CD8-positive, alpha-beta T cell (primary cell): ENCODE measurements at regions of chr10 and their contacts with region 1.

Region 1: DNA sequence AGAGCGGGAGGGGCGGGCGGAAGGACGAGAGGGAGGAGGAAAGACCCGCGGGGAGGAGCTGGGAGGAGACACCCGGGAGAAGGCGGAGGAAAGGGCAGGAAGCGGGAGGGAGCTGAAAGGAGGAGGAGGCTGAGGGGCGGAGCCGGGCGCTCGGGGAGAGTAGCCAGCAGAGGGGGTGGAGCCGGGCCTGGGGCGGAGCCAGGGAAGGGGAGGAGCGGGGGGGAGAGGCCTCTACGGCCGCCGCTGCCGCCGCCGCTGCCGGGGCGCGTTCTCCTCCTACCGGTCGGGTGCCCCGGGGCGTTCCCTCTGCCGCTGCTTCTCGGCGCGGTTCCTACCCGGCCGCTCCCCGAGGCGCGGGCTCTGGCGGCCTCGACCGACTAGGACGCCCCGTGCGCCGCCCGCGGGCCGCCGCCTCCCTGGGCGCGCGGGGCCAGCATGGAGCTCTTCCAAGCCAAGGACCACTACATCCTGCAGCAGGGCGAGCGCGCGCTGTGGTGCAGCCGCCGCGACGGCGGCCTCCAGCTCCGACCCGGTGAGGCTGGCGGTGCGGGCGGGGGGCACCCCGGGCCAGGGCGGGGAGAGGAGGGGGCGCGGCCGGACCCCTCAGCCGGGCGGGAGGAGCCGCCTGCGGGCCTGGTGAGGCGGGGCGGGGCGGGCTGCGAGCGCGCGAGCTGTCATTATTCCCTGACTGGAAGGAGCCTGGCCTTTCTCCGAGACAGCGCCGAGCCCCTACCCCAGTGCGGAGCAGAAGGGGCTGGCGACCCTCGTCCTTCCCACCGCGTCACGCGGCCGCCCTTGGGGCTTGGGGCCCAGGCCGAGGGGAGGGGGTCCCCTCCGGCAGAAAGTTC is at the start of gene INPP5F:
- DNase-seq: peak; percentile 95 to 100 (median 98)
- ATAC-seq: peak; percentile 95
- H3K4me3 ChIP-seq: peak within 1 kb of the TSS; percentile 64 to 81
- H3K4me3 Mint-ChIP-seq: peak within 1 kb of the TSS; percentile 90
- H3K27ac ChIP-seq: peak within 1 kb of the TSS; percentile 33 to 44
- H3K27ac Mint-ChIP-seq: peak within 1 kb of the TSS; percentile 81
- H3K4me1 ChIP-seq: peaks cover 16% of the 10 kb centered on the region
- H3K4me1 Mint-ChIP-seq: peaks cover 27% of the 10 kb centered on the region
- H3K27me3 ChIP-seq: no peaks in the 10 kb centered on the region
- H3K27me3 Mint-ChIP-seq: no peaks in the 10 kb centered on the region
- CTCF ChIP-seq: no peak
- total RNA-seq, gene INPP5F: 3.8 to 6.5 TPM

Region 2: GRCh38 chr10:118046395-118047156 is 1679.5 kb before region 1 on chr10 and contains the start of gene RAB11FIP2:
- CTCF ChIA-PET with region 1: no interaction called
- POLR2A ChIA-PET with region 1: no interaction called
- intact Hi-C with region 1: loop called in 1 of 2 experiments (anchors 5 kb)
- DNase-seq: peak; percentile 93 to 98 (median 96)
- ATAC-seq: peak; percentile 94
- H3K4me3 ChIP-seq: peak within 1 kb of the TSS; percentile 54 to 75
- H3K4me3 Mint-ChIP-seq: peak within 1 kb of the TSS; percentile 89
- H3K27ac ChIP-seq: peak within 1 kb of the TSS; percentile 44 to 70
- H3K27ac Mint-ChIP-seq: peak within 1 kb of the TSS; percentile 89
- H3K4me1 ChIP-seq: peaks cover 18% of the 10 kb centered on the region
- H3K4me1 Mint-ChIP-seq: peaks cover 45% of the 10 kb centered on the region
- H3K27me3 ChIP-seq: no peaks in the 10 kb centered on the region
- H3K27me3 Mint-ChIP-seq: no peaks in the 10 kb centered on the region
- CTCF ChIP-seq: no peak
- total RNA-seq, gene RAB11FIP2: 32.6 to 34.2 TPM

Region 3: GRCh38 chr10:118341791-118342637 is 1384.0 kb before region 1 on chr10 and contains the start of gene FAM204A:
- CTCF ChIA-PET with region 1: no interaction called
- POLR2A ChIA-PET with region 1: no interaction called
- intact Hi-C with region 1: loop called in 1 of 2 experiments (anchors 5 kb)
- DNase-seq: peak; percentile 95 to 99 (median 97)
- ATAC-seq: peak; percentile 94
- H3K4me3 ChIP-seq: peak within 1 kb of the TSS; percentile 81 to 86
- H3K4me3 Mint-ChIP-seq: peak within 1 kb of the TSS; percentile 96
- H3K27ac ChIP-seq: peak within 1 kb of the TSS; percentile 51 to 72
- H3K27ac Mint-ChIP-seq: peak within 1 kb of the TSS; percentile 95
- H3K4me1 ChIP-seq: peaks cover 22% of the 10 kb centered on the region
- H3K4me1 Mint-ChIP-seq: peaks cover 53% of the 10 kb centered on the region
- H3K27me3 ChIP-seq: no peaks in the 10 kb centered on the region
- H3K27me3 Mint-ChIP-seq: no peaks in the 10 kb centered on the region
- CTCF ChIP-seq: no peak
- total RNA-seq, gene FAM204A: 44.8 to 51.7 TPM

Region 4: GRCh38 chr10:119178372-119179119 is 547.5 kb before region 1 on chr10 and contains the start of gene PRDX3:
- CTCF ChIA-PET with region 1: no interaction called
- POLR2A ChIA-PET with region 1: no interaction called
- intact Hi-C with region 1: loop called (anchors 2 to 5 kb)
- DNase-seq: peak; percentile 85 to 94 (median 93)
- ATAC-seq: peak; percentile 99
- H3K4me3 ChIP-seq: peak within 1 kb of the TSS; percentile 85 to 93
- H3K4me3 Mint-ChIP-seq: peak within 1 kb of the TSS; percentile 89
- H3K27ac ChIP-seq: peak within 1 kb of the TSS; percentile 73 to 75
- H3K27ac Mint-ChIP-seq: peak within 1 kb of the TSS; percentile 95
- H3K4me1 ChIP-seq: peaks cover 20% of the 10 kb centered on the region
- H3K4me1 Mint-ChIP-seq: peaks cover 35% of the 10 kb centered on the region
- H3K27me3 ChIP-seq: no peaks in the 10 kb centered on the region
- H3K27me3 Mint-ChIP-seq: no peaks in the 10 kb centered on the region
- CTCF ChIP-seq: no peak
- total RNA-seq, gene PRDX3: 7.6 to 11.7 TPM

Region 5: DNA sequence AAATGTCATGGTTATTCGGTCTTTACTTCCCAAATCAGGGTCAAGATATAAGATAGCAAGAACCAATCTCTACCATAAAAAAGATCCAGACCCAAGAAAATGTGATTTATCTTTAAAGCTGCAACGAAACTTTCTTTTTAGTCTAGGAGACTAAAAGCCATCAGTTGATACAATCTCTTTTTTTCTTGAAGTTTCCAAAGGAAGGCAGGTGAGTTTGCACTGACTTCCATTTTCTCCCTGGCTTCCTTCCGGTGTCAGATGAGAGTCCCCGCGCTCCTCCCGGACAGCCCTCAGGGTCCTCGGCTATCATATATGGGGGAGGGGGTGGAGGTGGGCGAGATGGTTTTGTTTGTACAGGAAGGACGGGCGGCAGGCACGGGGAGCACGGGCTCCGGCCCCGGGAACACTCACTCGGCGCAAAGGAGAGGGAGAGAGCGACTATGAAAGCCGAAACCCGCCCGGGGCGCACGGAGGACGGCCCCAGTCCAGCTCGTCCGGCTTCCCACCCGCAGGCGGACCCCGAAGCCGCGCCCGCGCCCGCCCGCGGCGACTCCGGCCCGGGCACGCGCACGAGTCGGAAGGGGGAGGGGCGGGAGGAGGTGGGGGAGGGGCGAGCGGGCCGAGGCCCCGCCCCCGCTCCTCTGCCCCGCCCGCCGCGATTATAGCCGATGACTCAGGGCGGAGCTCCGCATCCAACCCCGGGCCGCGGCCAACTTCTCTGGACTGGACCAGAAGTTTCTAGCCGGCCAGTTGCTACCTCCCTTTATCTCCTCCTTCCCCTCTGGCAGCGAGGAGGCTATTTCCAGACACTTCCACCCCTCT is 75.1 kb before region 1 on chr10 and contains the start of gene BAG3:
- CTCF ChIA-PET with region 1: no interaction called
- POLR2A ChIA-PET with region 1: no interaction called
- intact Hi-C with region 1: loop called (anchors 1 to 2 kb)
- DNase-seq: peak; percentile 57 to 88 (median 76)
- ATAC-seq: peak; percentile 76
- H3K4me3 ChIP-seq: peak within 1 kb of the TSS; percentile 94 to 95
- H3K4me3 Mint-ChIP-seq: peak within 1 kb of the TSS; percentile 98
- H3K27ac ChIP-seq: peak within 1 kb of the TSS; percentile 78 to 88
- H3K27ac Mint-ChIP-seq: peak within 1 kb of the TSS; percentile 95
- H3K4me1 ChIP-seq: peaks cover 36% of the 10 kb centered on the region
- H3K4me1 Mint-ChIP-seq: peaks cover 44% of the 10 kb centered on the region
- H3K27me3 ChIP-seq: no peaks in the 10 kb centered on the region
- H3K27me3 Mint-ChIP-seq: no peaks in the 10 kb centered on the region
- CTCF ChIP-seq: no peak
- total RNA-seq, gene BAG3: 20.6 to 21.8 TPM

Region 6: DNA sequence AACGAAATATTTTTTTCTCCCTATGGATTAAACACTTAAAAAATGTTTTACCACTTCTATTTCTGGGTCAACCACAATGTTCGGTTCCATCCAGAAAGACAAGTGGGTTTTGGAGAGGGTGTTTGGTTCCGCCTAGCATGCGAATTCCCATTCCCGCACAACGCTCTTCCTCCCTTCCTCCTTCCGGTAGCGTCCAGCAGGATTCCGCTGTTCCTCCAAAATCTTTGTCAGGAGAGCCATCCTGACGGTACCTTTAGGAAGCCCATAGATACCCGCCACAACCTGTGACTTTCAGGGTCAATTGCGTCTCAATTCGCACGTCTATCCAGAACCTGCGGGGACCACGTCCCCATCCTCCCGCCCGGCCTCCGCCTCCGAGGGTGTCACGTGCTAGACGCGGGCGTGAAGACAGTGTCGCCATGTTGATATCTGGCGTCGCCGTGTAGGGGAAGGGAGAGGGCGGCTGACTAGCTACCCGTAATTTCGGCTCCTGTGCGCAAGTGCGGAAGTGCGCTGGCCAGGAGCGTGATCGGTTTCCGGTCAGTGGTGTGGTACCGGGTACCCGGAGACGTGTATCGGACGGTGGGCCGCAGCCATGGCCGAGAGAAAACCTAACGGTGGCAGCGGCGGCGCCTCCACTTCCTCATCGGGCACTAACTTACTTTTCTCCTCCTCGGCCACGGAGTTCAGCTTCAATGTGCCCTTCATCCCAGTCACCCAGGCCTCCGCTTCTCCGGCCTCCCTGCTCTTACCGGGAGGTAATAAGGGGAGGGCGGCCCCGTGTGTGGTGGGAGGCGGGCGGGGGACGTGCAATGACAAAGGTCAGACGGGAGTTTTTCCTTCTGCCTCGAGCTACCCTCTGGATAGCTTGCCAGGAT is 166.4 kb after region 1 on chr10 and contains the start of gene SEC23IP:
- CTCF ChIA-PET with region 1: no interaction called
- POLR2A ChIA-PET with region 1: interaction called, 3 read pairs
- intact Hi-C with region 1: loop called (anchors 1 to 5 kb)
- DNase-seq: peak; percentile 78 to 95 (median 89)
- ATAC-seq: peak; percentile 98
- H3K4me3 ChIP-seq: peak within 1 kb of the TSS; percentile 97 to 98
- H3K4me3 Mint-ChIP-seq: peak within 1 kb of the TSS; percentile 98
- H3K27ac ChIP-seq: peak within 1 kb of the TSS; percentile 84 to 96
- H3K27ac Mint-ChIP-seq: peak within 1 kb of the TSS; percentile 99
- H3K4me1 ChIP-seq: peaks cover 10% of the 10 kb centered on the region
- H3K4me1 Mint-ChIP-seq: peaks cover 46% of the 10 kb centered on the region
- H3K27me3 ChIP-seq: no peaks in the 10 kb centered on the region
- H3K27me3 Mint-ChIP-seq: no peaks in the 10 kb centered on the region
- CTCF ChIP-seq: no peak
- total RNA-seq, gene SEC23IP: 16.2 to 19.8 TPM